IMR-90 (cell line): ENCODE measurements at regions of chr2 and their contacts with region 1.

Region 1: GRCh38 chr2:118186110-118186857 is 98.0 kb downstream of the INSIG2 start:
- DNase-seq: peak; percentile 75
- ATAC-seq: peak; percentile 96
- H3K4me3 ChIP-seq: peak overlapping the region; percentile 55
- H3K27ac ChIP-seq: peak overlapping the region; percentile 49
- H3K4me1 ChIP-seq: no peaks in the 10 kb centered on the region
- H3K27me3 ChIP-seq: no peaks in the 10 kb centered on the region
- CTCF ChIP-seq: no peak
- POLR2A ChIP-seq: 0 out of 2 replicates have a peak, but pooled peaks have one; percentile 32
- RAD21 ChIP-seq: no peak

Region 2: GRCh38 chr2:118088051-118089024 is 97.9 kb before region 1 on chr2 and contains the start of gene INSIG2:
- CTCF ChIA-PET with region 1: no interaction called
- POLR2A ChIA-PET with region 1: no interaction called
- dilution Hi-C with region 1: no loop called
- in situ Hi-C with region 1: no loop called
- intact Hi-C with region 1: loop called (anchors 5 kb)
- DNase-seq: peak; percentile 91
- ATAC-seq: peak; percentile 97
- H3K4me3 ChIP-seq: peak within 1 kb of the TSS; percentile 75
- H3K27ac ChIP-seq: peak within 1 kb of the TSS; percentile 31
- H3K4me1 ChIP-seq: peaks cover 1% of the 10 kb centered on the region; the same call in 1 of the 2 replicates
- H3K27me3 ChIP-seq: peaks cover 2% of the 10 kb centered on the region; the same call in 1 of the 2 replicates
- CTCF ChIP-seq: no peak
- POLR2A ChIP-seq: no peak
- RAD21 ChIP-seq: no peak
- total RNA-seq, gene INSIG2: 9.1 and 12.5 TPM in 2 replicates

Region 3: GRCh38 chr2:118112771-118113334 is 73.4 kb before region 1 on chr2:
- CTCF ChIA-PET with region 1: no interaction called
- POLR2A ChIA-PET with region 1: no interaction called
- dilution Hi-C with region 1: no loop called
- in situ Hi-C with region 1: no loop called
- intact Hi-C with region 1: loop called (anchors 5 kb)
- DNase-seq: peak; percentile 71
- ATAC-seq: peak; percentile 40
- H3K4me3 ChIP-seq: no peak overlapping the region
- H3K27ac ChIP-seq: no peak overlapping the region
- H3K4me1 ChIP-seq: 0 out of 2 replicates have a peak, but pooled peaks cover 2% of the 10 kb centered on the region
- H3K27me3 ChIP-seq: no peaks in the 10 kb centered on the region
- CTCF ChIP-seq: no peak
- POLR2A ChIP-seq: no peak
- RAD21 ChIP-seq: no peak